Mammary epithelial cell (primary cell): ENCODE measurements at regions of chr10 and their contacts with region 1.

Region 1: GRCh38 chr10:22316285-22317120 is at the start of gene COMMD3:
- DNase-seq: peak; percentile 84
- H3K4me3 ChIP-seq: peak within 1 kb of the TSS; percentile 75 to 92 (median 78)
- H3K27ac ChIP-seq: peak within 1 kb of the TSS; percentile 86
- H3K4me1 ChIP-seq: peaks cover 16% of the 10 kb centered on the region
- H3K27me3 ChIP-seq: no peaks in the 10 kb centered on the region
- CTCF ChIP-seq: no peak
- total RNA-seq, gene COMMD3: 26.7 to 48.5 TPM

Region 2: GRCh38 chr10:21525367-21526183 is 790.9 kb before region 1 on chr10 and contains the start of gene SKIDA1:
- CTCF ChIA-PET with region 1: no interaction called
- dilution Hi-C with region 1: no loop called
- in situ Hi-C with region 1: no loop called
- intact Hi-C with region 1: loop called (anchors 10 kb)
- DNase-seq: peak; percentile 78
- H3K4me3 ChIP-seq: peak within 1 kb of the TSS; percentile 54 to 75 (median 68)
- H3K27ac ChIP-seq: peak within 1 kb of the TSS; percentile 92
- H3K4me1 ChIP-seq: peaks cover 22% of the 10 kb centered on the region
- H3K27me3 ChIP-seq: no peaks in the 10 kb centered on the region
- CTCF ChIP-seq: no peak
- total RNA-seq, gene SKIDA1: 1.3 to 1.5 TPM

Region 3: GRCh38 chr10:22228943-22229801 is 87.3 kb before region 1 on chr10:
- CTCF ChIA-PET with region 1: interaction called, 8 read pairs
- dilution Hi-C with region 1: no loop called
- in situ Hi-C with region 1: no loop called
- intact Hi-C with region 1: loop called (anchors 1 kb)
- DNase-seq: peak; percentile 89
- H3K4me3 ChIP-seq: peak overlapping the region; percentile 74 to 90 (median 88)
- H3K27ac ChIP-seq: peak overlapping the region; percentile 15
- H3K4me1 ChIP-seq: no peaks in the 10 kb centered on the region
- H3K27me3 ChIP-seq: peaks cover 3% of the 10 kb centered on the region
- CTCF ChIP-seq: no peak

Region 4: DNA sequence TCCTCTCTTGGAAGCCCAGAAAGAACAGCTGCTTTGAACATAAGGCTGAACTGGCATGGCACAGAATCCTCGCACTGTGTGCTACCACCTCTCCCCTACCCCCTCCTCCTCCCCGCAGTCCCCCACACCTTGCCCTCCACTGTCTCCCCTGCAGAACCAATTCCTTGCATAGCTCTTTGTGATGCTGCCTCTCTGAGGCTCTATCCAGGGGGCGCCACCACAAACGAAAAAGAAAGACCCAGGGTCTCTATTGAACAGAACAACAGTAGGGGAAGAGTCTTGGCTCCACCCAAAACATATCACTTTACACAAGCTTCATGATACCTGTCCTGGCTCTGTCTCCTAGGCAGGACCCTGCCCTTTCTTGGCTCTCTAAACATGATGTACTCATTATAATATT is 72.5 kb before region 1 on chr10:
- CTCF ChIA-PET with region 1: no interaction called
- dilution Hi-C with region 1: no loop called
- in situ Hi-C with region 1: no loop called
- intact Hi-C with region 1: loop called (anchors 2 kb)
- DNase-seq: no peak
- H3K4me3 ChIP-seq: no peak overlapping the region
- H3K27ac ChIP-seq: no peak overlapping the region
- H3K4me1 ChIP-seq: peaks cover 17% of the 10 kb centered on the region
- H3K27me3 ChIP-seq: no peaks in the 10 kb centered on the region
- CTCF ChIP-seq: no peak

Region 5: DNA sequence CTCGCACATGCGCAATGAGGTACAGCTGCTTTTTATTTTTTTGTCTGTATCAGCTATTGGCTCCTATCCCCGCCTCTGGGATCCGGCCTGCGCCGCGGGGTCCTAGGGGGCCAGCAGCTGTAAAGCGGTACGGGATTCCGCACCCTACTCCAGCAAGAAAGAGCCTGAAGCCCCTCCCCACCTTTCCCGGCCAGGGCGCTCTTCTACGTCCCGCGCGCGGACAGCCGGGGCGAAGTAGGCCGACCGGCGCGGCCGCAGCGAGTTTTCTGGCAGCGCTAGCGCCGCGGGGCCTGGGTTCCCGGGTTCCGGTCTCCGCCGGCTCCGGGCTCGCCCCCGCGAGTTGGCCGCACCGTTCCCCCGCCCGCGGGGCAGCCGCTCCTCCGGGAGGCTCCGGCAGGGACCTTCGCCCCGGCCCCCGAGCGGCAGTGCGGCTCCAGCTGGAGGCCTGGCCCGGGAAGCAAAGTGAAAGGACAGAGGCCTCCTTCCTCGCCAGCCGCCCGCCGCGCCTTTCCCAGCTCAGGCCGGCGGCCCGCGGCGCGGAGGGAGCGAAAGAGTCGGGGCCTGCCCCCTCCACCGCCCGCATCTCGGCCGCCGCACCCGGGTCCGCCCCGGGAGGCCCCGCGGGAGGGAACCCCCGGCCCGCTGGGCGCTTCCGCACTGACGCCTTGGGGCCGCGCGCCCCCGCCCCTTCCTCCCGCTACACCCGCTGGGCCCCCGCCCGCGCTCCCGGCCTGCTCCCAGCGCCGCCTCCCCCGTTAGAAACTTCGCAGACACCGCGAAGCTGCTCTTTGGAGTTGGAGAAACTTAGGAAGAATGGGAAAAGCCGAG is 24.1 kb after region 1 on chr10:
- CTCF ChIA-PET with region 1: no interaction called
- dilution Hi-C with region 1: no loop called
- in situ Hi-C with region 1: no loop called
- intact Hi-C with region 1: loop called (anchors 2 kb)
- DNase-seq: peak; percentile 71
- H3K4me3 ChIP-seq: peak overlapping the region; percentile 71 to 87 (median 83)
- H3K27ac ChIP-seq: peak overlapping the region; percentile 69
- H3K4me1 ChIP-seq: peaks cover 21% of the 10 kb centered on the region
- H3K27me3 ChIP-seq: peaks cover 55% of the 10 kb centered on the region
- CTCF ChIP-seq: no peak

Region 6: DNA sequence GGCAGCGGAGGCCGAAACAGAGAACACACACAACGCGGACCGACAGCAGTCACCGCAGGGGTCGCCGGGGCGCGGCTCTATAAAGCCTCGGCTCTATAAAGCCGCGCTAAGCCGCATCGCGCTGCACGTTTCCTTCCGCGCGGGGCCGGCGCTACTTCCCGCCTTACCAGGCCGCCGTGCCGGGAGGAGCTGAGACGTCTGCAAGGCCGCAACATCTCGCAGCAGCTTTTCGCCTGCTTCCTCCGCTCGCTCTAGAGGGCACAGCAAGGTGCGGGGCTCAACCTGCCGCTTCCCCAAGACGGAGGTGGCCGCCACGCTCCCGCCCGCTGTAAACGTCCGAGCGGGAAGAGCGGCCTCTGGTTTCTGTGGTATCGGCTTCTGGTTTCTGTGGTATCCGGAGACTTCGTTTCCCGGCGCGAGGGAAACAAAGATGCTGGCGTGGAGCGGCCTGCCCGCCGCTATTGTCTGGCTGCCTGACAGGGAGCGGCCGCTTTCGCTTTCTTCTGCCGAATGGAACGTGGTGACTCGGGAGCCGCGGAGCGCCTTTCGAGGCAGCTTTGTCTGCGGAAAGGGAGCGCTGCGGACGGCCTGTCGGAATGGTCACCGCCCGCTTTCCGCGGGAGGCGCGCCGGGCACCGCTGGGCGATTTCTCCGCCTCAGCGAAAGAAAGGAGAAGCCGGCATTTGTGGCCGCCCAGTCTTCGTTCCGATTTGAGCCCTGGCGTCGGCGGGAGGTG is 120.5 kb after region 1 on chr10:
- CTCF ChIA-PET with region 1: no interaction called
- dilution Hi-C with region 1: no loop called
- in situ Hi-C with region 1: no loop called
- intact Hi-C with region 1: loop called (anchors 5 kb)
- DNase-seq: peak; percentile 77
- H3K4me3 ChIP-seq: peak overlapping the region; percentile 62 to 67 (median 66)
- H3K27ac ChIP-seq: peak overlapping the region; percentile 66
- H3K4me1 ChIP-seq: peaks cover 34% of the 10 kb centered on the region
- H3K27me3 ChIP-seq: no peaks in the 10 kb centered on the region
- CTCF ChIP-seq: peak in 1 of 2 donors; percentile 37